ENCODE measurements at regions of chr10 and their contacts with region 1.

Region 1: DNA sequence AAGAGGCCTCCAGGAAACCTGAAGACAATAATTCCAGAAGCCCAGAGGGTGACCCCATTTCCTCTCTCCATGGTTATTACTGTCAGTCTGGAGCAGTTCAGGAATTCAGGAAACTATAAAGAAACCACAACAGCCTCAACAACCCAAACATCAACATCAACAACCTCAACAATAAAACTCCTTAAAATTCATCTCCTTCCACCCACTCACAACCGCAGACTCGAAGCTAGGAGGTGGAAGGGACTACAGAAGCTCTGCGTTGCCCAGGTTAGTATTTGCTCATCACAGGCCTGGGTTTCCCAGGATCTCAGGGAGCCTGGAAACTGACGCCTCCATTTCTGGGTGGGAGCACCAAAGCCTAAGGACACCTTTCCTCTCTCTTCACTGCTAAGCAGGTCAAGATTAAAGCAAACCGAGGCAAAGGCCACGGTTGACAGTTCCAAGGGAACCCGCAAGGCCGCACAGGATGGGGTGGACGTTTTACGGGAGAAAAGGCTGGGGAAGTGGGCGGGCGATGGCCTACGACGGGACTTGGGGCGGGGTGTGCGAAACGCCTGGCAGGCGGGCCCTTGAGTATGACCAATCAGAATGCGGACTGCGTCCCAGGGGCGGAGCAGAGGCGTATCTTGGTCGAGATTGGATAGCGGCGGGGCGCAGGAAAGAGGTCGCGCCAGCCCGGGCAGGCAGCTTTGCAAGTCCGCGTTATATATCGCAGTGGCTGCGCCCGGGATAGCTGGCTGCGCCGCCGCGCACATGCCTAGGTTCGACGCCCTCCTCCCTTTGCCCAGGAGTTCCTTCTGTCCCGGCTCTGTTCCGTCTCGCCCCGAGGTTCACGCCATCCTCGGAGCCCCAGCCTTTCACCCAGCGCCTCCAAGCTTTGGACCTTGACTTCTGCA is at the start of gene ELOVL3:
- DNase-seq: peak; percentile 94 to 98
- ATAC-seq: peak; percentile 88 to 94
- H3K4me3 ChIP-seq: peak within 1 kb of the TSS; percentile 36
- H3K27ac ChIP-seq: peak within 1 kb of the TSS; percentile 55 to 56
- H3K4me1 ChIP-seq: peaks cover 17% of the 10 kb centered on the region; the same call in 2 of the 3 replicates
- CTCF ChIP-seq: no peak
- EP300 ChIP-seq: no peak
- POLR2A ChIP-seq: peak; percentile 23; the same call in 1 of the 2 replicates
- RAD21 ChIP-seq: no peak
- polyA plus RNA-seq, gene ELOVL3: 0.53 and 0.86 TPM in 2 replicates

Region 2: GRCh38 chr10:102167861-102168260 is 58.0 kb before region 1 on chr10:
- CTCF ChIA-PET with region 1: interaction called, 111 read pairs
- POLR2A ChIA-PET with region 1: interaction called, 4 read pairs
- DNase-seq: no peak
- ATAC-seq: 0 out of 6 replicates have a peak, but pooled peaks of 1 of the 2 experiments have one; percentile 12
- H3K4me3 ChIP-seq: no peak overlapping the region
- H3K27ac ChIP-seq: no peak overlapping the region
- H3K4me1 ChIP-seq: peaks cover 3% of the 10 kb centered on the region; the same call in 1 of the 3 replicates
- CTCF ChIP-seq: no peak
- EP300 ChIP-seq: no peak
- POLR2A ChIP-seq: no peak
- RAD21 ChIP-seq: no peak

Region 3: DNA sequence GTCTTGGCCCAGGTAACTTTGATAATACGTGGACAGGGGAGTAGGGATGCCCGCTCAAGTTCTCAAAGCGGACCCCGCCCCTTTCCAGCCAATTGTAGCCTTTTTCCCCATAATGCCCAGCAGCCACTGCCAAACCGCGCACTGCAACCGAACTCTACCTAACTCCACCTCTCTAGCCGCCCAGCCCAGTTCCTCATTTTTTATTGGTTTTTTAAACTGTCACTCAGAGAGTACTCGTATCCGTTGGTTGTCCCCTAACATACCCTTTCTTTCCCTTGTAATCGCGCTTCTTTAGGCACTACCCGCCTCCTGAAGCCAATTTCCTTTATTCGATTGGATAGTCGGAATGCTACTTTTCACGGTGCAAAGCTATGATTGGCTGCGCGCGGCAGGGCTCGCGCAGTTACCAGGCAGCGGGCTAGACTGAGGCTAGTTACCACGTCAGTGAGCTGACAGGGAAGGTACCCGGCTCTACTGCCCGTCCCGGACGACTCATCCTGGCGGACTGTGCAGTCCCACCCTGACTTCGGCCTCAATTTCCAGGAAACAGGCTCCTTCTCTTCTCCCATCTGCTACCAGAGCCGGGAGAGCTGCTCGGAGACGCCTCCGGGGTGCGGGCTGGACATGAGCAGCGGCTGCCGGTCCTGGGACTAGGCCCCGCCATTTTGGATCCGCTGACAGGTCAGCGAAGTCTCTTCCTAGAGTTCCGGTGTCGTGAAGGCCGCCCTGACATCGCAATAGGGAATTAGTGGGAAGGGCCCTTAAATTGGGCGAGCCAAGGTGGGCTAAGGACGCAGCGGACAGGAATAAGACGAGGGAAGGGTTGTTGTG is 19.4 kb after region 1 on chr10 and contains the start of gene GBF1:
- CTCF ChIA-PET with region 1: interaction called, 116 read pairs
- POLR2A ChIA-PET with region 1: interaction called, 4 read pairs
- DNase-seq: peak; percentile 100
- ATAC-seq: peak; percentile 94
- H3K4me3 ChIP-seq: peak within 1 kb of the TSS; percentile 84
- H3K27ac ChIP-seq: peak within 1 kb of the TSS; percentile 83 to 88
- H3K4me1 ChIP-seq: peaks cover 28% of the 10 kb centered on the region
- CTCF ChIP-seq: no peak
- EP300 ChIP-seq: no peak
- POLR2A ChIP-seq: peak; percentile 91
- RAD21 ChIP-seq: no peak
- polyA plus RNA-seq, gene GBF1: 21.3 and 34.7 TPM in 2 replicates

Region 4: GRCh38 chr10:102310361-102311024 is 84.6 kb after region 1 on chr10:
- CTCF ChIA-PET with region 1: interaction called, 22 read pairs
- POLR2A ChIA-PET with region 1: interaction called, 4 read pairs
- DNase-seq: peak in 1 of 2 experiments; percentile 21
- ATAC-seq: peak in 1 of 2 experiments; percentile 76; a peak in 4 of 6 replicates
- H3K4me3 ChIP-seq: no peak overlapping the region
- H3K27ac ChIP-seq: 0 out of 6 replicates have a peak overlapping the region, but pooled peaks of 1 of the 2 experiments have one; percentile 2
- H3K4me1 ChIP-seq: peaks cover 22% of the 10 kb centered on the region
- CTCF ChIP-seq: no peak
- EP300 ChIP-seq: no peak
- POLR2A ChIP-seq: no peak
- RAD21 ChIP-seq: no peak

Region 5: GRCh38 chr10:102375250-102375649 is 149.4 kb after region 1 on chr10:
- CTCF ChIA-PET with region 1: interaction called, 140 read pairs
- POLR2A ChIA-PET with region 1: no interaction called
- DNase-seq: no peak
- ATAC-seq: peak; percentile 62 to 70; a peak in 4 of 6 replicates
- H3K4me3 ChIP-seq: no peak overlapping the region
- H3K27ac ChIP-seq: no peak overlapping the region
- H3K4me1 ChIP-seq: no peaks in the 10 kb centered on the region
- CTCF ChIP-seq: no peak
- EP300 ChIP-seq: no peak
- POLR2A ChIP-seq: no peak
- RAD21 ChIP-seq: peak in 1 of 2 experiments; percentile 24; a peak in 1 of 5 replicates

Region 6: GRCh38 chr10:102420810-102421644 is 195.1 kb after region 1 on chr10 and contains the start of gene FBXL15:
- CTCF ChIA-PET with region 1: interaction called, 123 read pairs
- POLR2A ChIA-PET with region 1: interaction called, 3 read pairs
- DNase-seq: peak; percentile 93 to 98
- ATAC-seq: peak; percentile 52 to 82
- H3K4me3 ChIP-seq: peak within 1 kb of the TSS; percentile 57
- H3K27ac ChIP-seq: peak within 1 kb of the TSS; percentile 86 to 90
- H3K4me1 ChIP-seq: peaks cover 25% of the 10 kb centered on the region
- CTCF ChIP-seq: no peak
- EP300 ChIP-seq: no peak
- POLR2A ChIP-seq: peak; percentile 56
- RAD21 ChIP-seq: peak in 1 of 2 experiments; percentile 7; a peak in 1 of 5 replicates
- polyA plus RNA-seq, gene FBXL15: 3.7 and 4.8 TPM in 2 replicates

Measured in A549 (cell line).